ENCODE measurements at regions of chr16 and their contacts with region 1.

Region 1: DNA sequence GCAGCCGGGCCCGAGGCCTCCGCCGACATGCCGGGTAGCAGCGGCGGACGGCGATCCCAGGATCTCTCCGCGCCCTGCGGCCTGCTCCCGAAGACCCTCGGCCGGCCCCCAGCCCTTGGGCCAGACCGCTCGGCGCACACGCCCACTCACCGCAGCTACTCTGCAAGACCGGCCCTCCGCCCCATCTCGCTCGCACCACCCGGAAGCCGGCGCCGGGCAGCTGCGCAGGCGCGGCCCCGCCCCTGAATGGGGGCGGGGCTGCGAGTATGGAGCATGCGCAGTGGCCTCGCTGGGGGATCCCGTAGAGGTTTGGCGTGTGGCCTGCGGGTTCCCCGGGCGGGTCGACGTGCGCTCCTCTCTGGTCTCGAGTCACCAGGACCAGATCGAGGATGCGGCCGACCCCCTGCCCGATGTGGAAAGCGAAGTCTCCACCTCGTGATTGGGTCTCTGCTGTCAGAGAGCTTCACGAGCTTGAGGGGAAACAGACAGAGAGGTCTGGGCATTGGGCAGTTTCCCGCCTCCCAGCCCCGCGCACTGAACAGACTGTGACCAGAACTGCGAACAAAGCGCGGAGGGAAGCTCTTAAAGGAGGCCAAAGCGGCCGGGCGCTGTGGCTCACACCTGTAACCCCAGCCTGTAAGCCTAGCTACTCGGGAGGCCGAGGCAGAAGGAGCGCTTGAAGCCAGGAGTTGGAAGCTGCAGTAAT is at the start of gene KCTD13:
- DNase-seq: peak; percentile 40 to 94
- H3K4me3 ChIP-seq: peak within 1 kb of the TSS; percentile 91 to 96
- H3K27ac ChIP-seq: peak within 1 kb of the TSS; percentile 75 to 80
- H3K4me1 ChIP-seq: peaks cover 11 to 17% of the 10 kb centered on the region in 2 donors
- H3K27me3 ChIP-seq: no peaks in the 10 kb centered on the region
- CTCF ChIP-seq: no peak
- total RNA-seq, gene KCTD13: 302 TPM

Region 2: GRCh38 chr16:29862884-29863668 is 63.1 kb before region 1 on chr16 and contains the start of gene CDIPT:
- intact Hi-C with region 1: loop called (anchors 2 kb)
- DNase-seq: peak; percentile 79 to 97
- H3K4me3 ChIP-seq: peak within 1 kb of the TSS; percentile 72 to 99
- H3K27ac ChIP-seq: peak within 1 kb of the TSS; percentile 85 to 93
- H3K4me1 ChIP-seq: peaks cover 4 to 25% of the 10 kb centered on the region in 2 donors
- H3K27me3 ChIP-seq: no peaks in the 10 kb centered on the region
- CTCF ChIP-seq: peak; percentile 57 to 66 (median 59)
- total RNA-seq, gene CDIPT: 174 TPM

Region 3: DNA sequence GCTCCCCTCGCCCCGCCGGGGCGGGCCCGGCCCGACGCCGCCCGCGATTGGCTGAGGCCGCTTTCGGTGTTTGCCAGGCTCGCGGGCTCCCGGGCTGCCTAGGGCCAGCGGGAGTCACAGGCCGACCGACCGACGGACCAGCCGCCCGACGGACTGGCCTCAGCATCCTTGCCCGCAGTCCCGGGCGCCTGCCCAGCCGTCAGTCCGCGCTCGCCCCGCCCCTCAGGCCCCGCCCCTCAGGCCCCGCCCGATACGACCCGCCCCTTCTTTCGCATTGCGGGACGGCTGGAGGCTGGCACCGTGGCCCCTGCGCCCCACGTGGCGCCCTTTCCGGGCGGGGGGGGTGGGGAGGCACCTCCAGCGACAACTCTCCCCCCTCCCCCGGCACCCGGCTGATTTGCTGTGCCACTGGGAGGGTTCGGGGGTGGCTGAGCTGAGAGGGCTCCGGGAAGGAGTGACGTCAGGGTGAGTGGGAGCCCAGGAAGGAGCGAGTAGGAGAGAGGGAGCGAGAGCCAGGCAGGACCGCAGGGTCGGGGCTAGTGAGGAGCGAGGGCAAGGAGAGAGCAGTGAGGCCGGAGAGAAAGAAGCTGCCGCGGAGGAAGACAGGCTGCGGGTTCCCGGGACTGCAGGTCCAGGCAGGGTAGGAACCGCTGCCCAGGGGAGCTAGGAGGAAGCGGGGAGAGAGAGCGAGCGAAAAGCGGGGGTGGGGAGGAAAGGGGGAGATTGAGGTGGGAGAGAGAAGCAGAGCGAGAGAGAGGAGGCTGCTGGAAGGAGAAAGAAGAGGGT is 25.9 kb before region 1 on chr16 and contains the start of gene ASPHD1:
- intact Hi-C with region 1: loop called (anchors 1 kb)
- DNase-seq: peak; percentile 26 to 81
- H3K4me3 ChIP-seq: peak within 1 kb of the TSS; percentile 57 to 77
- H3K27ac ChIP-seq: no peak within 1 kb of the TSS
- H3K4me1 ChIP-seq: peaks cover 4 to 7% of the 10 kb centered on the region in 2 donors
- H3K27me3 ChIP-seq: peaks cover 4% of the 10 kb centered on the region
- CTCF ChIP-seq: no peak
- total RNA-seq, gene ASPHD1: not detected

Region 4: DNA sequence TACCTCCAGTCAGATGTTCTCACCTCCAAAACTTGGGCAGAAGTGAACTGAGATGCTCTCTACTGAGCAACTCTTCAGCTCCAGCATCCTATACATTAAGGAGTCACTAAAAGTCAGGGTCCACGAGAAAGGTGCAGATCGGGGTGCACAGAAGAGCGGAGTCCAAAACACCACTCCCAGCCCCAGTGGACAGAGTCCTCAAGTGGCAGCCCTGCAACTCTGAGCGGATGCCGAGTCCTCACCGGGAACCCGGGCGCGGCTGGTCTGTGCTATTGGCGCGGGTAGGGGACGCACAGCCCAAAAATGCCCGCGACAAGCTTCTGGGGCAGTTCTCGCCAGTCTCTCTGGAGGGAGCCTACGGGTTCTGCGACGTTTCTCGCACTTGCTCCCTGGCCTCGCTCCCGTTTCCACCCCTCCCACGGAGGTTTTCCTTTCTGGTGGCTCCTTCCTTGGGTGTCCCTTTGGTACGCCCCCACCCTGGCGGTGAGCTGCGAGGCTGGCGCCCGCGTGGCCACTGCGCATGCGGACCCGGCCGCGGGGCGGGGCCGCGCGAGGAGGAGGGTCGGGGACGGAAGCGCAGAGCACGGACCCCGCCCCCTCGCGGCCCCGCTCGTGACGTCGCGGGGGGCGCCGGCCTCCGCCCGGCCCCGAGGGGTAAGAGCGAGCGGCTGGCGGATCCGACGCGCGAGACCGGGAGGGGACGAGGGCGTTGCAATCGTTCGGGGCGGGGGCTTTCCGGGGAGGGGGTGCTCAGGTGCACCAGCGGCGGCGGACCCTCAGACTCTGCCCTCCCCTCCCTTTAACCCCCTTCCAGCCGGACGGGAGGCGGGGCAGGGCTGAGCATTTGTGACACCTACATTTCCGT is 35.6 kb after region 1 on chr16 and contains the start of gene TMEM219:
- intact Hi-C with region 1: loop called (anchors 1 kb)
- DNase-seq: peak; percentile 73 to 97
- H3K4me3 ChIP-seq: peak within 1 kb of the TSS; percentile 71 to 75
- H3K27ac ChIP-seq: peak within 1 kb of the TSS; percentile 85 to 94
- H3K4me1 ChIP-seq: peaks cover 0 to 5% of the 10 kb centered on the region in 2 donors
- H3K27me3 ChIP-seq: no peaks in the 10 kb centered on the region
- CTCF ChIP-seq: peak; percentile 37 to 80 (median 42)
- total RNA-seq, gene TMEM219: 49.2 TPM

Region 5: DNA sequence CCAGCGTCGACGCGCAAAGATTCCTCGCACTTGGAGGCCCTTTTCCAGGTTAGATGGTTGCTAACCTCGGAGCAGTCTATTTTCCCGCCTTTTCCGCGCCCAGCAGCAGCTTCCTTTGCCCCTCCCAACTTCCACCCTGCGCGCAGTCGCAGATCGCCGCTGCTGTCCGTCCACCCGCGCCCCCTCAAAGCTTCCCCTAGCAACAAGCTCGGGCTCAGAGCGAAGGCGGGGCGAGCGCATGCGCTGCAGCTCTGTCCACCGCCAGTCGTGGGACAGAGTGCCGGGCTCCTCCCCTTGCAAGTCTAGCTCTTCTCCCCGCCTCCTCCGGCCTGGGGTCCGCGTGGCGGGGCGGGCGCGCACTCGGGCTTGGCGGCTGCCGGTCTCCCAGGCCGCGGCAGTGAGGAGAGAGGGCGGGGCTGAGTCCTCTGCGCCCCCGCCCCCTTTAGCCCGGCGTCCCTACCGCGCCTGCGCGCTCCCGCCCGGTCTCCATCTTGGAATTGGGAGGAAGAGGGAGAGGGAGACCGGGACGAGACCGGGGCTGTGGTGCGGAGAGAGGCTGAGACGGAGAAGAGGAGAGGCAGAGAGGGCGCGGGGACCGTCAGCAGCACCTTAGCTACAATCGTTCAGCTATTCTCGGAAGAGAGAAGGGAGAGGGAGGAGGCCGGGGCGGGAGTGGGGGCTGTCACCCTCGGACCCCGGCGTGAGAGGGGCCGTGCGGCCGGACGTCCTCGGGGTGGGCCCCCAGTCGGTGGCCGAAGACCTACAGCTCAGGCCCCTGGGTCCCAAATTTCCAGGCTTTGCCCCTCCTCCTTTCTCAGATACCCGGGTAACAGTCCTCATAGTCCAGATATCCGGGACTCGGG is 47.5 kb after region 1 on chr16 and contains the start of gene TAOK2:
- intact Hi-C with region 1: loop called (anchors 1 kb)
- DNase-seq: peak; percentile 94 to 99
- H3K4me3 ChIP-seq: peak within 1 kb of the TSS; percentile 80 to 93
- H3K27ac ChIP-seq: peak within 1 kb of the TSS; percentile 85 to 90
- H3K4me1 ChIP-seq: peaks cover 12 to 24% of the 10 kb centered on the region in 2 donors
- H3K27me3 ChIP-seq: no peaks in the 10 kb centered on the region
- CTCF ChIP-seq: no peak
- total RNA-seq, gene TAOK2: 101 TPM

Region 6: GRCh38 chr16:30018731-30019158 is 92.6 kb after region 1 on chr16:
- intact Hi-C with region 1: loop called (anchors 2 kb)
- DNase-seq: no peak
- H3K4me3 ChIP-seq: no peak overlapping the region
- H3K27ac ChIP-seq: no peak overlapping the region
- H3K4me1 ChIP-seq: no peaks in the 10 kb centered on the region
- H3K27me3 ChIP-seq: no peaks in the 10 kb centered on the region
- CTCF ChIP-seq: no peak

Region 7: DNA sequence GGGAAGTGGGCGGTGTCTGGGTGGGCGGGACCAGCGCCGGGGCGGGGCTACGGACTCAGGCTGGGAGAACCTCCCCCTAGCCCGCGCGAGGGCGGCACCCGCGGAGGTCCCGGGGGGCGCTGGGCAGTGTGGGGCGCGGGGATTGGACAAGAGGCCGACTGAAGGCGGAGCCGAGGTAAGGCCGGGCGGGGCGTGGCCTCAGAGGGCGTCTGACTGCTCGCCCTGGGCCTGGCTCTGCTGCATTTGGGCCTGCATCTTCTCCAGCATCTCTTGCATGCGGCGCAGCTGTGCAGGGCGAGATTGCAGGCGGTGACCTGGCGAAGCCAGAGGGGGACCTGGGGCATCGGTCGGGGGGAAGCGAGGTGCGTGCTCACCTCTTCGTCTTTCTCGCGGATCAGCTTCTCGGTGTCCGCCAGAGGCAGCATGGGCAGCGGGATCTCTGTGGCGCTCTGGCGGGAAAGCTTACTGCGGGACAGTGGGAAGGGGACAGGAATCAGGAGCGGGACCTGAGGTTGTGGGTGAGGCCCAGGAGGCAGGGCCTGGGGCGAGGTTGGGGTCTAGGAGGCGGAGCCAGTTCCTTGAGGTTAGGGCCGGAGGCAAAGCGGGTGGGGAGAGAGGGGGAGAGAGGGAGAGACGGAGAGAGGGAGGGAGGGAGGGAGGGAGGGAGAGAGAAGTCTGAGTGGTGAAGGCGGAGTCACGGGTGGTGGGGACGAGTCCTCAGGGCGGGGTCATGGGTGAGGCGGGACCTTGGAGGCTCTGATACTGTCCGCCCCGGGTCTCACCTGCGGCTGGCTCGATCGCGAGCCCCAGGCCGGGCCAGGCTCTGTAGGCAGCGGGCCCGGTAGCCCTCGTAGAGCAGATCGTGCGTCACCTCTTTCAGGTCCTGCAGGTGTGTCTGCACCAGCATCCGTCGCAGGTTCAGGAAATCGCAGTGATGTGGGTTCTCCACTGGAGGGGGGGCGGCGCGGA is 452.4 kb after region 1 on chr16:
- intact Hi-C with region 1: loop called (anchors 5 kb)
- DNase-seq: peak; percentile 96 to 100
- H3K4me3 ChIP-seq: peak overlapping the region; percentile 67 to 88
- H3K27ac ChIP-seq: peak overlapping the region; percentile 99 to 100
- H3K4me1 ChIP-seq: peaks cover 8 to 9% of the 10 kb centered on the region in 2 donors
- H3K27me3 ChIP-seq: no peaks in the 10 kb centered on the region
- CTCF ChIP-seq: peak in 2 of 3 experiments; percentile 6 to 28